ENCODE measurements at regions of chr14 and their contacts with region 1.

Region 1: GRCh38 chr14:99884834-99885648 is 91.8 kb downstream of the EML1 start:
- DNase-seq: peak in 1 of 3 donors; percentile 18
- ATAC-seq: peak; percentile 58 to 80
- H3K4me3 ChIP-seq: no peak overlapping the region
- H3K27ac ChIP-seq: no peak overlapping the region
- H3K4me1 ChIP-seq: no peaks in the 10 kb centered on the region
- H3K27me3 ChIP-seq: no peaks in the 10 kb centered on the region

Region 2: DNA sequence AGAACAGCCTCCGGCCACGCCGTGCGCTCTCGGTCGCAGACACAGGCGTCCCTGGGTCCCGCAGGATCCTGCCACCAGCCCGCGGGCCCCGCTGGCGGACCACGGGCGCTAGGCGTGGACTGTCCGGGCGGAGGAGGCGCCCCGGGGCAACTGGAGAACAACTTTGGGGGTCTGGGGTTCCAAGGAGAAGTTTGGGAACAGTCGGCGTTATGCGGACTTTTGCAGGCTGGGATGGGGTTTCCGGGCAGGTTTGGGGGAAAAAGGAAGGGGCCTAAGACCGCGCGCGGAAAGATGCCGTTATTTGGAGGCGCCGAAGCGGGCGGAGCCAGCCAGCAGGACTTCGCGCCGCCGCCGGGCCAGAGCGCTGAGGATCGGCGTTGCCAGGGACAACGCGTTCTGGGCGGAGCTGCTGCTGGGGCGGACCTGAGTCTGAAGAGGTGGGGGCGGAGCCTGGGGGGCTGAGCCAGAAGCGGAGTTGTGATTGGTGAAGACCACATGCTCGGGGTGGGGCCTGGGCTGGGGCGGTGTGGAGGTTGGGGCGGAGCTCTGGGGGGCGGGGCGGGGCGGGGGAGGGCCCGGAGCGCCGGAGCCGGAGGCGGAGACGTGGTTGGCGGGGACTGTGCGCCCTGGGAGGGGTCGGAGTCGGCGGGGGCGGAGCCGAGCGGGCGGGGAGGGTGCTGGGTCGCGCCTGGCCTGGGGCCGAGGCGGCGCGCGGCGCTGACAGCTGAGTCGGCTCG is 201.3 kb before region 1 on chr14 and contains the start of gene CYP46A1:
- intact Hi-C with region 1: loop called in 1 of 4 experiments (anchors 5 kb)
- DNase-seq: peak; percentile 100
- ATAC-seq: peak; percentile 98
- H3K4me3 ChIP-seq: peak within 1 kb of the TSS; percentile 68
- H3K27ac ChIP-seq: peak within 1 kb of the TSS; percentile 57
- H3K4me1 ChIP-seq: peaks cover 2% of the 10 kb centered on the region
- H3K27me3 ChIP-seq: no peaks in the 10 kb centered on the region
- total RNA-seq, gene CYP46A1: 5.7 to 9.2 (median 7.9) TPM

Region 3: GRCh38 chr14:99729991-99730868 is 154.8 kb before region 1 on chr14:
- intact Hi-C with region 1: loop called (anchors 1 to 5 kb)
- DNase-seq: peak; percentile 69 to 93 (median 91)
- ATAC-seq: peak; percentile 36 to 58
- H3K4me3 ChIP-seq: peak overlapping the region; percentile 62
- H3K27ac ChIP-seq: no peak overlapping the region
- H3K4me1 ChIP-seq: no peaks in the 10 kb centered on the region
- H3K27me3 ChIP-seq: no peaks in the 10 kb centered on the region

Region 4: GRCh38 chr14:99793213-99794150 is 91.6 kb before region 1 on chr14 and contains the start of gene EML1:
- intact Hi-C with region 1: loop called in 2 of 4 experiments (anchors 10 kb)
- DNase-seq: peak; percentile 91 to 96 (median 95)
- ATAC-seq: peak; percentile 93
- H3K4me3 ChIP-seq: peak within 1 kb of the TSS; percentile 97
- H3K27ac ChIP-seq: peak within 1 kb of the TSS; percentile 70
- H3K4me1 ChIP-seq: peaks cover 9% of the 10 kb centered on the region
- H3K27me3 ChIP-seq: no peaks in the 10 kb centered on the region
- total RNA-seq, gene EML1: 32.5 to 39.1 (median 34.8) TPM